MCF 10A (cell line): ENCODE measurements at regions of chr10 and their contacts with region 1.

Region 1: GRCh38 chr10:69348816-69349541 is 67.7 kb downstream of the TACR2 start:
- DNase-seq: peak; percentile 96
- H3K4me3 Mint-ChIP-seq: no peak overlapping the region
- H3K27ac Mint-ChIP-seq: peak overlapping the region; percentile 93
- H3K4me1 Mint-ChIP-seq: peaks cover 25% of the 10 kb centered on the region
- H3K27me3 Mint-ChIP-seq: no peaks in the 10 kb centered on the region
- CTCF ChIP-seq: no peak

Region 2: GRCh38 chr10:69327463-69328379 is 21.3 kb before region 1 on chr10:
- CTCF ChIA-PET with region 1: interaction called, 4 read pairs
- POLR2A ChIA-PET with region 1: interaction called, 282 read pairs
- intact Hi-C with region 1: no loop called
- DNase-seq: peak; percentile 79
- H3K4me3 Mint-ChIP-seq: peak overlapping the region; percentile 69
- H3K27ac Mint-ChIP-seq: peak overlapping the region; percentile 88
- H3K4me1 Mint-ChIP-seq: peaks cover 47% of the 10 kb centered on the region
- H3K27me3 Mint-ChIP-seq: no peaks in the 10 kb centered on the region
- CTCF ChIP-seq: no peak